Left colon (tissue), 2 donors: ENCODE measurements at regions of chr1 and their contacts with region 1.

Region 1: DNA sequence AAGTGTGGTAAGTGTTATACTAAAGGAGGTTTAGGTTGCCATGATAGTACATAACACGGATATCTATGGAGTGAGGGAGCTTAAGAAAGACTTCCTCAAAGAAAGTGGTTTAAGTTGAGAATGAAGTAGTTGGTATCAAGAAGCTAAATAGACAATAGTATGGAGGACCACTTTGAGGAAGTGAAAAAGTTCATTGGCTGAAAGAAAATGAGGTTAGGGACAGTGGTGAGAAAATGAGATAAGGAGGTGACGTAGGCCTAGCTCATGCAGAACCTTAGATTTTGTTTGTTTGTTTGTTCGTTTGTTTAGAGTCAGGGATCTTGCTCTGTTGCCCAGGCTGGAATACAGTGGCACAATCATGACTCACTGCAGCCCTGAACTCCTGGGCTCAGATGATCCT is 72.2 kb upstream of the PPIH start:
- DNase-seq: no peak
- ATAC-seq: no peak

Region 2: GRCh38 chr1:42756956-42757891 is 171.2 kb after region 1 on chr1:
- intact Hi-C with region 1: loop called in 1 of 2 experiments (anchors 10 kb)
- DNase-seq: no peak
- ATAC-seq: peak; percentile 87

Region 3: DNA sequence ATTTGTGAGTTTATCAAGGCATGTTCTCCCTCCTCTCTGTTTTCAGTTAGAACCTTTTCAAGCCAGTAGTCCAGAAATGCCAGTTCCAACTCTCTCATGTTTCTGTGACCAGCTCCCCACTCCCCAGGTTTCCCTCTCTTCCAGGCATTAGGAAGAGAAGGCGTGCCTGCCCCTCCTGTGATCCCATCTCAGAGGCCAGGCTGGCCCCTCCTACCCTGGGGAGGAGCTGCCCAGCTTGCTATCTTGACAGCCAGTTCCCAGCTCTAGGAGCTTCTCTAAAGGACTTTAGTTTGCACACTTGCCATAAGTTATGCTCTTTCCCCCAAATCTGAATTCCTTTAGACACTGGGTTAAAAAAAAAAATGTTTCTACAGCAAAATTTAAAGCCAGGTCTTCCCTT is 858.8 kb after region 1 on chr1:
- intact Hi-C with region 1: no loop called
- DNase-seq: peak; percentile 9 to 12
- ATAC-seq: peak; percentile 29